ENCODE measurements at regions of chr10 and their contacts with region 1.

Region 1: DNA sequence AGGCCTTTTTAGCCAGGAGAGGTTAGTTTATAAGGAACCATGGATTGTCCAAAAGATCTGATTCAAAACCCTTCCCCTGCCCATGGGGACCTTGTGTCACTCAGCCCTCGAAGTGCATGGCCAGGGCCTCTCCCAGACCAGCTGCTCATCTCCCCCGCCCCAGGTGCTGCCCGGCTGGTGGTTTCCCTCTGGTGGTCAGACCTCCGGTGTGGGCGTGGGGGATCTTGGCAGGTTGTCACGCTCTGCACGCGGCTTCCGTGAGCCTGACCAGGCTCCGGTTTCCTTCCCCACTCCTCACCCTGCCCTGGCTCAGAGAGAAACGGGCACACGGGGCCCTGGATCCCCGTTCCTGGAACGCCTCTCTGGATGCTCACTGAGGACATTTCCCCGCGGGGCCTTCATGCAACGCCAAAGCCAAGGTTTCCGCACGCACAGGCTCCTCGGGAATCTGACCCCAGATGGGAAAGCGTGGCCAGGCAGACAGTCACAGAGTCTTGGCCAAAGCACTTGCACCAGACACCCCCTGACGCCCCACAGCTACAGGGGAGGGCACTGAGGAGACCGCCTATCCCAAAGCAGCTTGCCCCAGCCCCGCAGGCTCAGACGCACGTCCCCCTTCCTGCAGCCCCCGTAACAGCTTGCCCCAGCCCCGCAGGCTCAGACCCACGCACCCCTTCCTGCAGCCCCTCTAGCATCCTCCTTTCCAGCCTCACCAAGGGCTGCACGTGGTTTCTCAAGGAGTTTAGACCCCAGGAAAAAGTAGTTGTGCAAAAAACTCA is 7.8 kb upstream of the DIP2C start:
- DNase-seq: no peak
- ATAC-seq: peak; percentile 23
- H3K4me3 ChIP-seq: no peak overlapping the region
- H3K27ac ChIP-seq: no peak overlapping the region
- H3K4me1 ChIP-seq: no peaks in the 10 kb centered on the region
- H3K27me3 ChIP-seq: no peaks in the 10 kb centered on the region

Region 2: GRCh38 chr10:127612-128432 is 569.5 kb before region 1 on chr10:
- intact Hi-C with region 1: no loop called
- DNase-seq: peak in 1 of 2 donors; percentile 53
- ATAC-seq: no peak
- H3K4me3 ChIP-seq: no peak overlapping the region
- H3K27ac ChIP-seq: no peak overlapping the region
- H3K4me1 ChIP-seq: no peaks in the 10 kb centered on the region
- H3K27me3 ChIP-seq: no peaks in the 10 kb centered on the region

Region 3: DNA sequence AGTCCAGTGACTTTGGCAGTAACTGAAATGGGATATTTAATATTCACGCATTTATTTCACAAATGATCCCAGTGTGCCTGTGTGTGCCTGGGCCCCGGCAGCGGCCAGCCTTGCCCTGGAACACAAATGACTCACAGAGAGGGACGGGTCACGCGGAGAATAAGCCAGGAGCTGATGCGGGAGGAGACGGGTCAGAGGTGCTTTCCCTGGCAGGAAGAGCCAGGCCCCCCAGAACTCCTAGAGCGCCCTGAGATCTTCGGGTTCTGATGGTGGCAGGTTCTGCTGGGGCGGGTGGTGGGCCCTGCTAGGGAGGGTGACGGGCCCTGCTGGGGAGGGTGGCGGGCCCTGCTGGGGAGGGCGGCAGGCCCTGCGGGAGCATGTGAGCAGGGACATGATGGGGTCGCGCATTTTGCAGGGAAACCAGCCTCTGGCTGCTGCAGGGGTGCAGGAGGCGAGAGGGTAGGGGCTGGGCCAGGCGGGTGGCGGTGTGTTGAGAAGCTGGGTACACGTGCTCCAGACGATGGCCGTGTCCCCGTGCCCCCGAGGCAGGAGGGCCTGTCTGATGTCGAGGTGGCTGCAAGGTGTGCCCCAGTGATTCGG is 76.4 kb after region 1 on chr10:
- intact Hi-C with region 1: loop called in 1 of 2 experiments (anchors 5 kb)
- DNase-seq: no peak
- ATAC-seq: no peak
- H3K4me3 ChIP-seq: no peak overlapping the region
- H3K27ac ChIP-seq: no peak overlapping the region
- H3K4me1 ChIP-seq: no peaks in the 10 kb centered on the region
- H3K27me3 ChIP-seq: no peaks in the 10 kb centered on the region

Region 4: GRCh38 chr10:1151076-1152033 is 454.1 kb after region 1 on chr10:
- intact Hi-C with region 1: no loop called
- DNase-seq: no peak
- ATAC-seq: no peak
- H3K4me3 ChIP-seq: no peak overlapping the region
- H3K27ac ChIP-seq: no peak overlapping the region
- H3K4me1 ChIP-seq: no peaks in the 10 kb centered on the region
- H3K27me3 ChIP-seq: no peaks in the 10 kb centered on the region

Measured in aorta (tissue), 5 donors.